GM18951 (cell line): ENCODE measurements at regions of chr3 and their contacts with region 1.

Region 1: DNA sequence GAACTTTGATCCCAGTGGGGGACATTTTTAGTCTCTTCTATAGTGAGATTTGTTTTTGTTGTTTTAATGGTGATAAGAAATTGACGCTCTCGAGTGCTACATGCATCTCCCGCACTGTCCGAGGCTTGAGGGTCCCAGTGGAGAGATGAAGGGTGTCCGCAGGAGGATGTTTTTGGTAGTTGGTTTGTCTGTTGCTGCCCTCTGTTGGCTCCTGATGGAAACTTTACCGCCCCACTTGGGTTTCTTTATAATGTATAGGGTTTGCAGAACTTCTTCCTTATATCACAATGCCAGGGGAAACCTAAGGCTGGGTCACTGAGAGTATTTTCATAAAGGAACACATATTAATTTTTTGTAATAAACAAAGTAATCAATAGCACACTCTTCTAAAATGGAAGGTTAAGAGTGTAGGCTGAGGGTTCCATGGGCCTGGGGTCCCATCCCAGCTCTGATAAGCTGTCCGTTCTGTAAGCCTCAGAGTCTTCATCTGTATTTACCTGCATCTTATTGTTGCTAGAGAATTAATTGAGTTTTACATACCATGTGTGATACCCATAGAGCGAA is 185.3 kb upstream of the FEZF2 start:
- POLR2A ChIP-seq: no peak

Region 2: GRCh38 chr3:62201438-62202035 is 357.1 kb before region 1 on chr3:
- in situ Hi-C with region 1: loop called (anchors 25 kb)
- POLR2A ChIP-seq: no peak

Region 3: DNA sequence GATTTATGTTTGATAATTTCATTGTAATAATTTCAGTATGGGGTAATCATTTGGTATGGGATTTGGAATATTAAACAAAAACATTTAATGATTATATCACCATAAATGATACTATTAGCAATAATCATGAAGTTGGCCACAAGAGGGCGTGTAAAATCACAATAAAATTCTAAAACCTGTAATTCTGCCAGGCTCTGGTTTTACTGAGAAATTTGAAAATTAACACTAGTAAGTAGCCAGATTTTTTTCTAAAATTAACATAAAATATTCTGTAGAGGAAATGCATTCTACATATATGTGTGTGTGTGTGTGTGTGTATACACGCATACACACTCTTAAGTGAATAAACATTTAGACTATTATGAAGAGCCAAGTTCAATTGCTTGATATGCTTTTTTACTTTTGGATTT is 225.8 kb before region 1 on chr3:
- in situ Hi-C with region 1: loop called (anchors 25 kb)
- POLR2A ChIP-seq: no peak